Activated CD8-positive, alpha-beta T cell treated with anti-CD3 and anti-CD28 coated beads for 36 hours (primary cell): ENCODE measurements at regions of chr20 and their contacts with region 1.

Region 1: GRCh38 chr20:21235484-21236445 is 67.4 kb upstream of the XRN2 start:
- DNase-seq: peak; percentile 81
- ATAC-seq: peak; percentile 84
- H3K4me3 Mint-ChIP-seq: no peak overlapping the region
- H3K27ac Mint-ChIP-seq: no peak overlapping the region
- H3K4me1 Mint-ChIP-seq: peaks cover 4% of the 10 kb centered on the region
- H3K27me3 Mint-ChIP-seq: no peaks in the 10 kb centered on the region
- CTCF ChIP-seq: peak; percentile 98

Region 2: GRCh38 chr20:21191839-21192238 is 43.9 kb before region 1 on chr20:
- CTCF ChIA-PET with region 1: no interaction called
- POLR2A ChIA-PET with region 1: no interaction called
- intact Hi-C with region 1: no loop called
- DNase-seq: no peak
- ATAC-seq: no peak
- H3K4me3 Mint-ChIP-seq: no peak overlapping the region
- H3K27ac Mint-ChIP-seq: no peak overlapping the region
- H3K4me1 Mint-ChIP-seq: no peaks in the 10 kb centered on the region
- H3K27me3 Mint-ChIP-seq: no peaks in the 10 kb centered on the region
- CTCF ChIP-seq: no peak

Region 3: GRCh38 chr20:21219686-21220085 is 16.1 kb before region 1 on chr20:
- CTCF ChIA-PET with region 1: interaction called, 33 read pairs
- POLR2A ChIA-PET with region 1: no interaction called
- intact Hi-C with region 1: no loop called
- DNase-seq: no peak
- ATAC-seq: no peak
- H3K4me3 Mint-ChIP-seq: no peak overlapping the region
- H3K27ac Mint-ChIP-seq: no peak overlapping the region
- H3K4me1 Mint-ChIP-seq: no peaks in the 10 kb centered on the region
- H3K27me3 Mint-ChIP-seq: no peaks in the 10 kb centered on the region
- CTCF ChIP-seq: no peak

Region 4: DNA sequence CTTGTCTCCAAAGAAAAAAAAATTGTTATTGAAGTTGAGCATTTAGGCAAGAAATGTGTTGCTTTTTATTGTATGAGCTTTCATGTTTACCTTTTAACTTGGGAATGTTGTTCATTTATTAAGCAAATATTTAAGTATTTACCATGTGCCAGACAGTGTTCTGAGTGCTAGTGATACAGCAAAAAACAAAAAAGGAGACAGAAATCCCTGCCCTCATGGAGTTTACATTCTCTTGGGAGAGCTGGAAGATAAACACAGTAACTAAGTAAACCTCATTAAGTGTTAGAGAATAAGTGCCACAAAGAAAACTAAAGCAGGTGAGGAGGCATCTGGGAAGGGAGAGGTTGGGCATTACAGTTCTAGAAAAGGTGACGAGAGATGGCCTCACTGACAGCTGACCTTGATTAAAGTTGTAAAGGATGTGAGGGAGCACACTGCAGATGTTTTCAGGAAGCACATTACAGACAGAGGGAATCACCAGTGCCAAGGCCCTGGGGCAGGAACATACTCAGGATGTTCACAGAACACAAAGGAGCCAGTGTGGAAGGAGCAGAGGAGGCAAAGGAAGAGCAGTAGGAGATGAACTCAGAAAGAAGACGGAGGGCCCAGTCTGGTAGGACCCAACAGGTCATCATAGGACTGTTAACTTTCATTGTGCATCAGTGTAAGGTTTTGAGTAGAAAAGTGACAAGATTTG is 100.8 kb after region 1 on chr20:
- CTCF ChIA-PET with region 1: interaction called, 11 read pairs
- POLR2A ChIA-PET with region 1: no interaction called
- intact Hi-C with region 1: no loop called
- DNase-seq: no peak
- ATAC-seq: no peak
- H3K4me3 Mint-ChIP-seq: no peak overlapping the region
- H3K27ac Mint-ChIP-seq: no peak overlapping the region
- H3K4me1 Mint-ChIP-seq: peaks cover 6% of the 10 kb centered on the region
- H3K27me3 Mint-ChIP-seq: no peaks in the 10 kb centered on the region
- CTCF ChIP-seq: no peak

Region 5: DNA sequence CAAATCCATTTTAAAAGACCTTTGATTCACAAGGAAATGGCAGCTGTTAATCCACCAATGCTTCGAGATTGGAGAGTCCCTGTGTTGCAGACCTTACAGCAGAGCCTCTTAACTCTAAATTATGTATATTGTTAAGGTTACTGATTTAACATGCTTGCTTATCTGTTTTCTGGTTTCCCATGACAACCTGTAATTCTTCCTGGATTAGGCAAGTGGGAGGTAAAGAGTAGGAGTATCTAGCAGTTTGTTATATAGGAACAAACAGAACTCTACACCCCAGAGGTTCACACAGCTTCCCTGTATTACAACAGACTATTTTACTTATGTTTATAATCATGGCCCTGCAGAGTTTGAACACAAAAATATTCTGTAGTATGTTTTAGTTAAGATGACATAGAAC is 122.1 kb after region 1 on chr20:
- CTCF ChIA-PET with region 1: interaction called, 17 read pairs
- POLR2A ChIA-PET with region 1: no interaction called
- intact Hi-C with region 1: no loop called
- DNase-seq: no peak
- ATAC-seq: no peak
- H3K4me3 Mint-ChIP-seq: no peak overlapping the region
- H3K27ac Mint-ChIP-seq: no peak overlapping the region
- H3K4me1 Mint-ChIP-seq: peaks cover 17% of the 10 kb centered on the region
- H3K27me3 Mint-ChIP-seq: no peaks in the 10 kb centered on the region
- CTCF ChIP-seq: no peak

Region 6: DNA sequence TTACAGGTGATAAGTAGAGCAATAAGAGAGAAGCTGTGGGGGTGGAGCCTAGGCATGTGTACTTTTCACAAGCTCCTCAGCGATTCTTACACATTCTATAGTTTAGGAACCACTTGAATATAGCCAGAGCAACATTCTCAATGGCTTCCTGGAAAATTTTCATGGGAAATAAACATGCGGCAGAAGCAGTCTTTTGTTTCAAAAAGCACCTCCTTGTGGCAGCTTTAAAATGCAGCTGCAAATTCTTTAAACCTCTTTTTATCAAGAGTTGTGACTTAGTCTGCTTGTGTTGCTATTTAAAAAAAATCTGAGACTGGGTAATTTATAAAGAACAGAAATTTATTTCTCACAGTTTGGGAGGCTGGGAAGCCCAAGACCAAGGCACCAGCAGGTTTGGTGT is 254.3 kb after region 1 on chr20:
- CTCF ChIA-PET with region 1: interaction called, 26 read pairs
- POLR2A ChIA-PET with region 1: no interaction called
- intact Hi-C with region 1: no loop called
- DNase-seq: no peak
- ATAC-seq: no peak
- H3K4me3 Mint-ChIP-seq: no peak overlapping the region
- H3K27ac Mint-ChIP-seq: no peak overlapping the region
- H3K4me1 Mint-ChIP-seq: no peaks in the 10 kb centered on the region
- H3K27me3 Mint-ChIP-seq: peaks cover 29% of the 10 kb centered on the region
- CTCF ChIP-seq: no peak

Region 7: GRCh38 chr20:21513881-21514540 is 278.2 kb after region 1 on chr20 and contains the start of gene NKX2-2:
- CTCF ChIA-PET with region 1: interaction called, 26 read pairs
- POLR2A ChIA-PET with region 1: interaction called, 3 read pairs
- intact Hi-C with region 1: no loop called
- DNase-seq: no peak
- ATAC-seq: no peak
- H3K4me3 Mint-ChIP-seq: peak within 1 kb of the TSS; percentile 33
- H3K27ac Mint-ChIP-seq: no peak within 1 kb of the TSS
- H3K4me1 Mint-ChIP-seq: peaks cover 31% of the 10 kb centered on the region
- H3K27me3 Mint-ChIP-seq: peaks cover 74% of the 10 kb centered on the region
- CTCF ChIP-seq: no peak
- total RNA-seq, gene NKX2-2: not detected